Heart right ventricle (tissue), 16 donors: ENCODE measurements at regions of chr9 and their contacts with region 1.

Region 1: GRCh38 chr9:132235946-132236661 is 74.2 kb downstream of the NTNG2 start:
- DNase-seq: peak; percentile 72 to 76
- ATAC-seq: peak in 6 of 8 donors; percentile 12 to 43 (median 28)
- H3K4me3 ChIP-seq: no peak overlapping the region
- H3K27ac ChIP-seq: no peak overlapping the region
- H3K4me1 ChIP-seq: peaks cover 0 to 39% (median 6%) of the 10 kb centered on the region in 9 donors
- H3K27me3 ChIP-seq: peaks cover 0 to 20% (median 11%) of the 10 kb centered on the region in 7 donors
- CTCF ChIP-seq: peak; percentile 91 to 99 (median 96)

Region 2: DNA sequence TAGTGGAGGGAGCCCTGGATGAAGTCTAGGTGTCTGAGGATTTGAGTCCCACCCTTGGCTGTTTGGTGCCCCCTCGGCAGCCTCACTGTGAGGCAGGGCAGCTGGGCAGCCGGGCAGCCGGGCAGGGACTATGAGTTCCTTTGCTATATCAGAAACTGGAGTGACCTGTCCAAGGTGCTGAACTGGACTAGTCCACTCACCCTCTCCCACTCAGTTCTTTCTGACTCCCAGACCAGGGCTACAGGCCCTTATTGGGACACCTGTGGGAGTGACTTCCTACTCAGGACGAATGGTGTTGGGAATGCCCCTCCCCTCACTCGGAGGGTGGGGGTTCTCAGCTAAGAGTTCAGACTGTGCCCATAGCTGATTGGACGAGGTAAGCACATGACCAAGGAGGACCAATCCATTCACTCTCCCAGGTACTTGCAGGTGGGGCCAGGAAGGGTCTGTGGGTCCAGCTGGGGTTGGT is 462.2 kb before region 1 on chr9:
- intact Hi-C with region 1: loop called in 1 of 10 experiments (anchors 10 kb)
- DNase-seq: peak in 1 of 2 donors; percentile 74
- ATAC-seq: peak in 7 of 8 donors; percentile 56 to 75 (median 70)
- H3K4me3 ChIP-seq: no peak overlapping the region
- H3K27ac ChIP-seq: no peak overlapping the region
- H3K4me1 ChIP-seq: no peaks in the 10 kb centered on the region
- H3K27me3 ChIP-seq: peaks cover 0 to 23% (median 8%) of the 10 kb centered on the region in 7 donors
- CTCF ChIP-seq: no peak

Region 3: DNA sequence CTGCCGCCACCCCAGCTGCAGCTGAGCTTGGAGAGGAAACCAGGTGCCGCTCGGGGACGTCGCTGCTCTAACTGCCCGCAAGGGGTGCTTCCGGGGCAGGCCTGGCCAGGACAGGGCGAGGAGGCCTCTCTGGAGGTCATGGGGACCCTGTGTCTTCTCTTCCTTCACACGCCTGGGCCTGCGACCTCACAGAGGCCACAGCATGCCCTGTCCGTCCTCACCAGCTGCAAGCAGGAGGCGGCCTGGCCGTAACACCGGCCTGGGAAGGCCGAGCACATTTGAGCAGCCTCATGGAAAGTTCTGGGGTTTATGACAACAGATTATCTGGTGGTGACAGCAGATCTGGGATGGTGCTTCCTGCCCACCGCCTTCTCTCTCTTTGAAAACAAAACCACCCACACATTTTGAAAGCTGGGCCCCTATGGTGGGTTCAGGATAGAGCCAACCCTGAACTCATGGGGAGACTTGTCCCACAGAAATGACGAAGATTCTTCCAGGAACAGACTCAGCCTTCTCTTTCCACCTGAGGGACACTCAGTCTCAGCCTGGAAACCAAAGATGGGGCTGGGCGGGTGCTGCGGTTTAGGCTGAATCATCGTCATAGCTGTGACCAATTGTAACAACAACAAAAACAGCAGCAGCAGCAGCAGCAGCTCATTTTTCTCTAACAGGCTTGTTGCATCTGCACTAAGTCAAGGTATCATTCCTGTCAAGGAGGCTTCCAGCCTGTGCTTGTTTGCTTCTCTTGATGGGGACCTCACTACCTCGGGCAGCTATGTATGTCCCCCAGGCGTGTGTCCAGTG is 396.6 kb before region 1 on chr9:
- intact Hi-C with region 1: loop called in 2 of 10 experiments (anchors 5 to 10 kb)
- DNase-seq: peak in 1 of 2 donors; percentile 28
- ATAC-seq: peak in 6 of 8 donors; percentile 44 to 69 (median 58)
- H3K4me3 ChIP-seq: no peak overlapping the region
- H3K27ac ChIP-seq: peak overlapping the region in 3 of 10 donors; percentile 43 to 50 (median 46)
- H3K4me1 ChIP-seq: peaks cover 0 to 8% (median 0%) of the 10 kb centered on the region in 9 donors
- H3K27me3 ChIP-seq: peaks cover 0 to 32% (median 25%) of the 10 kb centered on the region in 7 donors
- CTCF ChIP-seq: no peak

Region 4: DNA sequence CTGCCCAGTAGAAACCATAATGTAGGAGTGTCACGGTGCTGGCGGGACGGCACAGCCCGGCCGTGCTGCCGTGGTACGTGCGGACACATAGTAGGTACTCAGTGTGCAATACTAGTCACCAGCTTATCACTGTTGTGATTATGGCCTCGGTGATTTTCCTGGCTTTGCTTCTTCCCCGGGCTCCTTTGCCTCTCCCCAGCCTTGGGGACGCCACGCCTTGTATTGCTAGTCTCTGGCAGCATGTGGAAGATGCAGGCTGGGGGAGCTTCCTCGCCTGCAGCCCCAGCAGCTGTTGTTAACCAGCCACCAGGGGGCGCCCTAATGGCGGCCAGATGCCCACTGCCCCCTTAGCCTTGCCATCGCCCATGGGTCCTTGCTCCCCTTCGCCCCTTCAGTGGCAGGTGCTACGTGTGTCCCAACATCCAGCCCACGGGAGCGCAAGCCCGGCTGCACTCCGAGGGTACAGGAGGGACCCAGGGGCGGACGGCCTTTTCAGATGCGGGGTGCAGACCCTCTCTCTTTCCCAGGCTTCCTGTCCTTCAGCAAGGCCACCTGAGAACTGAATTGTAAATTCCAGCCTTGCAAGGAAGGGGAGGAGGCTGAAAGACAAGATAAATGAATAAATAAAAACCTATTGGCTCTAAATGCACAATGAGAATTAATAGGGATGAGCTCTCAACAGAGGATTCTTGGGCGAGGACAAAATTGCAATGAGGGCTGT is 66.3 kb before region 1 on chr9:
- intact Hi-C with region 1: loop called (anchors 1 to 10 kb)
- DNase-seq: peak in 1 of 2 donors; percentile 48
- ATAC-seq: peak; percentile 44 to 82 (median 62)
- H3K4me3 ChIP-seq: no peak overlapping the region
- H3K27ac ChIP-seq: no peak overlapping the region
- H3K4me1 ChIP-seq: peaks cover 0 to 16% (median 7%) of the 10 kb centered on the region in 9 donors
- H3K27me3 ChIP-seq: peaks cover 0 to 48% (median 38%) of the 10 kb centered on the region in 7 donors
- CTCF ChIP-seq: peak; percentile 78 to 94 (median 83)